PC-9 (cell line): ENCODE measurements at regions of chr2 and their contacts with region 1.

Region 1: GRCh38 chr2:31958140-31958717 is 52.6 kb downstream of the MEMO1 start:
- DNase-seq: no peak
- H3K4me3 ChIP-seq: no peak overlapping the region
- H3K27ac ChIP-seq: no peak overlapping the region
- H3K4me1 ChIP-seq: no peaks in the 10 kb centered on the region
- H3K27me3 ChIP-seq: no peaks in the 10 kb centered on the region
- CTCF ChIP-seq: no peak

Region 2: DNA sequence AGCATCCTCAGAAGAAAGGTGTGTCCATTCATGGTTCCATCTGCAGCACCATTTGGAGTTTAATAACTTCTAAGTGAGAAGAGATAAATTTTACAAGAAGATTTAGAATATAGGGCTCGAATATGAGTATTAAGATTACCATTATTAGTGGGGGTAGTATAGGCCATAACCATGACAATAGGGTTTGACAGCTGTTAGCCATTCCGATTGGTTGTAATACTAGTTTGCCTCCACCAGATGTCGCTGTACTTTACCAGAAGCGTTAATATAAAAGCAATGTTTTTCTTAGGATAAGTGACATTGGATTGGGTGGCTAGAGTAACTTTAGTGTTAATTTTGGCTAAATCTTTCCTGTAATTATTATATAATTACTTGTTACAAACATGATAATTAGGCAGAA is 269.9 kb before region 1 on chr2:
- CTCF ChIA-PET with region 1: no interaction called
- POLR2A ChIA-PET with region 1: no interaction called
- intact Hi-C with region 1: no loop called
- DNase-seq: no peak
- H3K4me3 ChIP-seq: no peak overlapping the region; the same call in 1 of the 2 replicates
- H3K27ac ChIP-seq: no peak overlapping the region
- H3K4me1 ChIP-seq: no peaks in the 10 kb centered on the region
- H3K27me3 ChIP-seq: no peaks in the 10 kb centered on the region
- CTCF ChIP-seq: peak; percentile 88

Region 3: GRCh38 chr2:31980674-31981356 is 22.6 kb after region 1 on chr2:
- CTCF ChIA-PET with region 1: no interaction called
- POLR2A ChIA-PET with region 1: interaction called, 11 read pairs
- intact Hi-C with region 1: no loop called
- DNase-seq: no peak
- H3K4me3 ChIP-seq: no peak overlapping the region
- H3K27ac ChIP-seq: no peak overlapping the region
- H3K4me1 ChIP-seq: no peaks in the 10 kb centered on the region
- H3K27me3 ChIP-seq: no peaks in the 10 kb centered on the region
- CTCF ChIP-seq: no peak

Region 4: GRCh38 chr2:32172870-32173269 is 214.6 kb after region 1 on chr2:
- CTCF ChIA-PET with region 1: no interaction called
- POLR2A ChIA-PET with region 1: no interaction called
- intact Hi-C with region 1: no loop called
- DNase-seq: no peak
- H3K4me3 ChIP-seq: no peak overlapping the region
- H3K27ac ChIP-seq: no peak overlapping the region
- H3K4me1 ChIP-seq: 0 out of 2 replicates have a peak, but pooled peaks cover 2% of the 10 kb centered on the region
- H3K27me3 ChIP-seq: no peaks in the 10 kb centered on the region
- CTCF ChIP-seq: no peak